AG04450 (cell line): ENCODE measurements at regions of chr21 and their contacts with region 1.

Region 1: DNA sequence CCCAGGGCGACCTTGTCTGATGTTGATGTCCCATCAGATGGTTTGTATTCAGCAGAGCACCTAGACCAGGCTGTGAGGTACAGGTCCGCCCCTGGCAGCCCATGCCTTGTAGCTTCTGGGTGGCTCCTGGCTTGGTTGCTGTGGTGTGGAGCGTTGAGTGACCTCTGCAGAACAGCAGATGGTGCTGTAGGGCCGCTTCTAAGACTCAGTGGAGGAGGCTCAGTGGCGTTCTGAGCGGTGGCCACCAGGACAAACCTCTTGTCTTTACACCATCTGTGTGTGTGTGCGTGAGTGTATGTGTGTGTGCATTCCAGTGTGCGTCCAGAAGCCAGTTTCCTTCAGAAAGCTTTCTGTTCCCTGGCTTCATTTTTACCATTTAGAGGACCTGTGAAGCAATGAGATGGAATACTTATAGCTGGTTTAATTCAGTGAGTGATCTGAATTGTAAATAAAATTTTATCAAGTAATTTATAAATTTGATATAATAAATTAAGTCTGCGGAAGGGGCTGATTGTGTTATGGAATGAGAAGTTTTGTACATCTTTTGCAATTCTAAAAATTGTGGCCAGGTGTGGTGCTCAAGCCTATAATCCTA is 66.1 kb downstream of the ADARB1 start:
- DNase-seq: peak; percentile 88
- H3K4me3 ChIP-seq: no peak overlapping the region
- H3K27ac ChIP-seq: no peak overlapping the region
- H3K27me3 ChIP-seq: no peaks in the 10 kb centered on the region
- CTCF ChIP-seq: peak; percentile 96

Region 2: DNA sequence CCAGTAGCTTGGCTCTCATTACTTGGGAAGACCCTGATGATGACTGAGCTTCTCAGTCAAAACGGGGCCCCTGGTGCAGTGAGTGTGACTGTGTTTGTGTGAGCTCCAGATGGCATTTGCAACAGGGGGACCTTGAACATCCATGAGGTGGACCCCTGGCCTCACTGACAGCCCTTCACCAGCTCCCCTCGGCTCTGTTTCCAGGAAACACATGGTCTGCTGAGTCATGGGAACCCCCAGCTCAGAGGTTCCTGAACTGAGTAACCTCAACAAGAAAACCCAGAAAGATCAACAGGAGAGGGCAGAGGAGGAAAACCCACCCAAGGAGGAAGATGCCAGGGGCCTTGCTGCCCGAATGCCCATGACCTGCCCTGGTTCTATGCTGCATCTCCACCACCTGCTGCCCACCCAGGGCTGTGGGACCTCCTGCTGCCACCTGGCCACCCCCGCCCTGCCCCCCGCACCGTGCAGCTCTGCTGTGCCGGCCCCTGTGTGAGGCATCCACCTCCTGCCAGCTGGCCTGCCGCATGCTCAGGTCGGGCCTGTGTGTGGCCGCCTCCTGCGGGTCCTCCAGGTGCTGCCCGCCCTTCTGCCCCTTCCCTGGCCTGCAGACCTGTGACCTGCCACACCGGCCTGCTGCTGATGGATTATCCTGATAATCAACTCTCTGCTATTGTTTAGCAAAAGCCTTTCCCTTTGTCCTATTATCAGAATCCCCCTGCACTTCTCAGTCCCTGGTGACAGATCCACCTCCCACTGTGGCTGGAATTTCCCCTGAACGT is 454.3 kb before region 1 on chr21:
- CTCF ChIA-PET with region 1: no interaction called
- POLR2A ChIA-PET with region 1: no interaction called
- DNase-seq: no peak
- H3K4me3 ChIP-seq: no peak overlapping the region
- H3K27ac ChIP-seq: no peak overlapping the region
- H3K27me3 ChIP-seq: peaks cover 14% of the 10 kb centered on the region
- CTCF ChIP-seq: no peak

Region 3: GRCh38 chr21:44801468-44802395 is 338.7 kb before region 1 on chr21 and contains the start of gene UBE2G2:
- CTCF ChIA-PET with region 1: interaction called, 19 read pairs
- POLR2A ChIA-PET with region 1: interaction called, 3 read pairs
- DNase-seq: no peak
- H3K4me3 ChIP-seq: peak within 1 kb of the TSS; percentile 87
- H3K27ac ChIP-seq: peak within 1 kb of the TSS; percentile 47
- H3K27me3 ChIP-seq: no peaks in the 10 kb centered on the region
- CTCF ChIP-seq: no peak
- polyA plus RNA-seq, gene UBE2G2: 60.9 and 62.2 TPM in 2 replicates

Region 4: GRCh38 chr21:44949779-44950198 is 190.7 kb before region 1 on chr21:
- CTCF ChIA-PET with region 1: interaction called, 202 read pairs
- POLR2A ChIA-PET with region 1: interaction called, 3 read pairs
- DNase-seq: no peak
- H3K4me3 ChIP-seq: no peak overlapping the region
- H3K27ac ChIP-seq: no peak overlapping the region
- H3K27me3 ChIP-seq: no peaks in the 10 kb centered on the region
- CTCF ChIP-seq: peak; percentile 92

Region 5: DNA sequence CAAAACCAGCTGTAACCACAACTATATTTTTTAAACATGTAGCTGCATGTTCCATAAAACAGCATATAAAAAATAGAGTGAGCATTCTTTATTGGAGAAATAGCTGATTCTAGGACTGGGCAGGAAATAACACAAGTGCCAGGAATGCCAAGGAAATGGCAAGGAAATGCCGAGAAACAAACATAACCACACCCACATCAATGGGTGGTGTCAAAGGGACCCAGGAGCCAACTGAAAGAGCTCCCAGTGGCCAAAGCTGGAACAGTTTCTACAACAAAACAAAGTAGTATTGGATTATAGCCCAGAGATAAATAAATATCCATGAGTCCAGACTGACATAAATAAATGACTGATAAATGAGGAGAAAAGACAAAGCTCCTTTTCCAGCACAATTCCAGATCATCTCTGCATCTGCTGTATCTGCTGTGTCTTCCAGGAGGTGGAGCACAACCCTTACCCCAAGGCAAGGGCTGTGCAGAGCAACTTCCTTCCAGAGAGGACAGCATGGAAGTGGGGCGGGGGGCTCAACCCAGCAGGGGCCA is 38.0 kb before region 1 on chr21:
- CTCF ChIA-PET with region 1: interaction called, 24 read pairs
- POLR2A ChIA-PET with region 1: no interaction called
- DNase-seq: no peak
- H3K4me3 ChIP-seq: no peak overlapping the region
- H3K27ac ChIP-seq: no peak overlapping the region
- H3K27me3 ChIP-seq: no peaks in the 10 kb centered on the region
- CTCF ChIP-seq: peak; percentile 31; the same call in 1 of the 2 replicates

Region 6: DNA sequence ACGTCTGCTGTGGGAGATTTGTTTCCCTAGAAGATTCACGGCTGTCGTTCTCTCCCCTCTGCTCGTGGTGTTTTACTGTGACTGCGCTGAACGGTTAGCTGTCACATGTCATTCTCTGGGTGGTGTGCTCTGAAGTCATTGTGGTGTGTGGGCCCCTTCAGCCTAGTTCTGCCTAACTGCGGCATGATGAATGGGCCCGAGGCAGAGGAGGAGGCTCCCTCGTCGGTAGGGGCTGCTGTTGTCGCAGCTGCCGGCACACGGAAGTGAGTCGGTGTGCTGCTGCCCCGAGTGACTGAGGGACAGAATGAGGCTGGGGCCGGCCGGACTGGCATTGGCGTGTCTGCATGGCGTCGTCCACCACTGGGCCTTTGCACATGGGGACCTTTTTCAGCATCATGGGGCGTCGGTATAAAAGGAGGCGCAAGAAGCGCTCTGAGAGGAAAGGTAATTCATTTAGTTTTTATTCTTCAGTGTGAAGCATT is 11.9 kb after region 1 on chr21:
- CTCF ChIA-PET with region 1: interaction called, 82 read pairs
- POLR2A ChIA-PET with region 1: no interaction called
- DNase-seq: no peak
- H3K4me3 ChIP-seq: no peak overlapping the region
- H3K27ac ChIP-seq: no peak overlapping the region
- H3K27me3 ChIP-seq: no peaks in the 10 kb centered on the region
- CTCF ChIP-seq: no peak

Region 7: GRCh38 chr21:45182958-45183357 is 42.5 kb after region 1 on chr21:
- CTCF ChIA-PET with region 1: interaction called, 11 read pairs
- POLR2A ChIA-PET with region 1: no interaction called
- DNase-seq: no peak
- H3K4me3 ChIP-seq: no peak overlapping the region
- H3K27ac ChIP-seq: no peak overlapping the region
- H3K27me3 ChIP-seq: no peaks in the 10 kb centered on the region
- CTCF ChIP-seq: no peak